A673 (cell line): ENCODE measurements at regions of chr2 and their contacts with region 1.

Region 1: DNA sequence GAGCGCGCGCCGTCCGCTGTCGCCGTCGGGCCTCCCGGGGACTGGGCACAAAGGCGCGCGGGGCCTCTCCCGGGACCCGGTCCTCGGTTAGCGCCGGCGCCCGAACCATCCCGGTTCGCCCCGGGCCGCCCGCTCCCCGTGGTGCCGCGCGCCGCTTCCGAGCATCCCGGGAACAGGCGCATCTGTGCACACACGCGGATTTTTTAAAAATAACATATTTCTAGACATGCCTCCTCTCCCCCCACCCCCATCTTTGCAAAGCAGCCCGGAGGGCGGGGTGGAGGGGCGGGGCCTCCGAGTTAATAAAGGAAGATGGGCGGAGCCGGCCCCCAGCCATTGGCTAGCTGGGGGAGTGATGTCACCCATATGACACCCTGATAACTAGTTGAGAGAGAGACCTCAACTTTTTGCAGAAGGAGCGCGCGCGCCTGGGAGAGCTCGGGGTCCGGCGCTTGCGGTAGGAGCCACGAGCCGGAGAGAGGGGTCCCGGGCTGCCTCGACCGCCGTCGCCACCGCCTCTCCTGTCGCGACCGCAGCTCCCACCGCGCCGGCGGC is at the start of gene SOX11:
- DNase-seq: peak; percentile 96
- H3K4me3 ChIP-seq: peak within 1 kb of the TSS; percentile 86
- H3K27ac ChIP-seq: peak within 1 kb of the TSS; percentile 91
- H3K4me1 ChIP-seq: no peaks in the 10 kb centered on the region
- H3K27me3 ChIP-seq: no peaks in the 10 kb centered on the region
- CTCF ChIP-seq: no peak
- total RNA-seq, gene SOX11: 73.9 and 75.1 TPM in 2 replicates

Region 2: DNA sequence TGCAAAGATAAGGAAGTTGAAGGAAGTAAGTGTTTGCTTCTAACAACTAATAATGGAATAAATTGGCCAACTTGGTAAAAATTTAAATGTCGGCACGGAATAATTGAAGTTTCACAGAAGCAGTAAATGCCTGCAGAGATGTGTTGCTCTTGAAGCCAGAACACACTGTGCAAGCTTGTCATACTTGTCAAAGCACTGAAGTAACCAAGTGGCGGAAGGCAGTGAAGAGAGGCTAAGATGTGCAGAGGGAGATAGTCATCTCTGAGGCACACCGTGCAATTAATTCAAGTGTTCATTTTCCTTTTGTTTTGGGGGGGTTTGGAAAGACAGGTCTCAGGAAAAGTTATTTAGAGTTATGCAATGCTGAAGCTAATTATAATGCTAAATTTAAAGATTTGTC is 1983.5 kb before region 1 on chr2:
- CTCF ChIA-PET with region 1: no interaction called
- POLR2A ChIA-PET with region 1: interaction called, 13 read pairs
- intact Hi-C with region 1: no loop called
- DNase-seq: no peak
- H3K4me3 ChIP-seq: no peak overlapping the region
- H3K27ac ChIP-seq: no peak overlapping the region
- H3K4me1 ChIP-seq: peaks cover 11% of the 10 kb centered on the region
- H3K27me3 ChIP-seq: peaks cover 4% of the 10 kb centered on the region
- CTCF ChIP-seq: no peak

Region 3: DNA sequence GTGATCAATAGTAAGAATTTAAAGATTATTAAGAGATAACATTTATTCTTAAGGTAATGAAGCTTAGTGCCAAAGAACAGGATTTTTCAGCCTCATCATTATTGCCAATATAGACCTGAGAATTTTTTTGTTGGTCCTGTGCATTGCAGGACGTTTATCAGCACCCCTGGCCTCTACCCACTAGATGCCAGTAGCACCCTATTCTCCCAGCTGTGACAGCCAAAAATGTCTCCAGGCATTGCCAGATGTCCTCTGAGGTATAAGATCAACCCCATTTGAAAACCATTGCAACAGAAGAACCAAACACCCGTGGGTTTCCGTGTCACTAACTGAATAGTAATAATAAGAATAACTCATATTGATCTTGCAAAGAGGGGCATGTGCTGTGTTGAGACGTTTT is 699.8 kb before region 1 on chr2:
- CTCF ChIA-PET with region 1: no interaction called
- POLR2A ChIA-PET with region 1: no interaction called
- intact Hi-C with region 1: loop called (anchors 5 kb)
- DNase-seq: peak; percentile 55
- H3K4me3 ChIP-seq: no peak overlapping the region
- H3K27ac ChIP-seq: no peak overlapping the region
- H3K4me1 ChIP-seq: no peaks in the 10 kb centered on the region
- H3K27me3 ChIP-seq: no peaks in the 10 kb centered on the region
- CTCF ChIP-seq: peak; percentile 51

Region 4: DNA sequence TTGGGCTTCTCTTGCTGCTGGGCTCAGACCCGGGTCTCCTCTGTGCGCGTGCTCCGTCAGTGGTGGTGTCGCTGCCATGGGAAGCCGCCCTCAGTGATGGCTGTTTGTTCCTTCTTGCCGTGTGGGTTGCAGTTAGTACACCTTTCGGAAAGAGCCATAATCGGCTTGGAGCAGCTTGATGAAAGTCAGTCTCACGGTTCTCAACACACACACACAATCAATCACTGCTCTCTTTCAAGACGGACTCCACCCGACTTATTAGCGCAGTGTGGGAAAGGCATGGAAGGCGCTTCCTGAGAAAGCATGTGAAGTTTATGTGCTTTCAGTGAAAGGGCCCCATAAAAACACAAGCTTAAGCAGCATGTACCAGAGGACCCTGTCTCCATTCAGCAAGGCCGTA is 64.2 kb after region 1 on chr2:
- CTCF ChIA-PET with region 1: no interaction called
- POLR2A ChIA-PET with region 1: no interaction called
- intact Hi-C with region 1: no loop called
- DNase-seq: no peak
- H3K4me3 ChIP-seq: no peak overlapping the region
- H3K27ac ChIP-seq: no peak overlapping the region
- H3K4me1 ChIP-seq: no peaks in the 10 kb centered on the region
- H3K27me3 ChIP-seq: no peaks in the 10 kb centered on the region
- CTCF ChIP-seq: no peak

Region 5: DNA sequence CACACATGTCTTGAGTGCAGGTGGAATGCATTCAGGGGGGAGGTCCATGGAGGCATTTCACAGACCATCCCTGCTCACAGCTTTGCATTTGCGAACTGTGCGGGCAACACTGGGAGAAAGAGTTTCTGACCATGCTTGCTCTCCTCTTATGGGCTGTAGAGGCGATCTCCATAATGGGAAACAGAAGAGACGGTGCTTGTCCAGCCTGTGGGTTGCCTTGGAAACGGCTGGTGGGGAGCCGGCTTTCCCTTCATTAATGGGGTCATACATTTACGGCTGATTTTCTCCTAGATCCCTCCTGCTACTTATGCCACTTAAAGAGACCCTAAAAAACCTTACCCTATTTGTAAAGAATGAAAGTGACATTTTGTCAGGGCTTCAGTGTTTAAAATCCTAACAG is 147.5 kb after region 1 on chr2:
- CTCF ChIA-PET with region 1: no interaction called
- POLR2A ChIA-PET with region 1: no interaction called
- intact Hi-C with region 1: loop called (anchors 10 kb)
- DNase-seq: no peak
- H3K4me3 ChIP-seq: no peak overlapping the region
- H3K27ac ChIP-seq: no peak overlapping the region
- H3K4me1 ChIP-seq: peaks cover 4% of the 10 kb centered on the region
- H3K27me3 ChIP-seq: no peaks in the 10 kb centered on the region
- CTCF ChIP-seq: no peak

Region 6: DNA sequence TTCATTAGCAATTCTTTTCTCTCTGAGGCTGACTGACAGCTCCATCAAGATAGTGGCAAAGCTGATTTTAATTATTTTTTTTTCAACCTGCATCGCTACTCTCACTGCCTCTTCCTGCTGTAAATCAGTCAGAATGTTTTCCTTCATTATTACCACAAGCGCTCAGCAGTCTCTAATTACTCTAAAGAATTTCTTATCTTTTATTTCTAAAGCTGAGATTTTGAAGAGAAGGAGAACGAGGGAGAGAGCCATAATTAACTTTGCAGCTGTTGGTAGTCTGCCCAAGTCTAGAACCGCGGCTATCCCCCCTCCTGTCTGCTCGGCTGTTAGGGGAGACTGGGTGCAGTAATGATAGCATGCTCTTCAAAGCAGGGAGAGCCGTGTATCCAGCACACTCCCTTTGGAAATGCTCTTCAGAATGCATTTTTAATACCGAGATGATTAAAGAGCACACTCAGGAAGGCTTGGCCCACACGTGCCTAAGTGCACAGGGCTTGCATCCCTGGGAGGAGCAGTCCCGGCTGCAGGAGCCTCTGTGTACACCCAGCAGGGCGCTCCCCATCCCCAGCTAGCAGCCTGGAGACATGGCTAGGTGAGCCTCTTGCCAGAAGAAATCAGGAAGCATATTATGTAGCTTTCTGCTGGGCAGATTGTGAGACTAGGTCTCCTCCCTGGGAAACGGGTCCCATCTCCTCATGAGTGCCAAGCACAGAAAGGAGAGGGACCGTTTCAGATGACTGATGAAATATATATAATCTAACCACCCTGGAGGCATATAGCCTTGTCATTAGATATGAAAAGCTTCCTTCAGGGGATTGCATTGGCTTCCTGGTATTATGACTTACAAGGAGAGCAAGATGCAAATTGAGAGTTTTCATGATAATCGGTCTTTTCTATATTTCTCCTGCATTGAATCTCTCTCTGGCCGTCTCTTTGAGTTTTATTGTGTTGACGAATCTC is 618.5 kb after region 1 on chr2:
- CTCF ChIA-PET with region 1: no interaction called
- POLR2A ChIA-PET with region 1: no interaction called
- intact Hi-C with region 1: loop called (anchors 10 kb)
- DNase-seq: peak; percentile 91
- H3K4me3 ChIP-seq: peak overlapping the region; percentile 28
- H3K27ac ChIP-seq: peak overlapping the region; percentile 64
- H3K4me1 ChIP-seq: peaks cover 53% of the 10 kb centered on the region
- H3K27me3 ChIP-seq: no peaks in the 10 kb centered on the region
- CTCF ChIP-seq: no peak